B cell (primary cell): ENCODE measurements at regions of chr1 and their contacts with region 1.

Region 1: DNA sequence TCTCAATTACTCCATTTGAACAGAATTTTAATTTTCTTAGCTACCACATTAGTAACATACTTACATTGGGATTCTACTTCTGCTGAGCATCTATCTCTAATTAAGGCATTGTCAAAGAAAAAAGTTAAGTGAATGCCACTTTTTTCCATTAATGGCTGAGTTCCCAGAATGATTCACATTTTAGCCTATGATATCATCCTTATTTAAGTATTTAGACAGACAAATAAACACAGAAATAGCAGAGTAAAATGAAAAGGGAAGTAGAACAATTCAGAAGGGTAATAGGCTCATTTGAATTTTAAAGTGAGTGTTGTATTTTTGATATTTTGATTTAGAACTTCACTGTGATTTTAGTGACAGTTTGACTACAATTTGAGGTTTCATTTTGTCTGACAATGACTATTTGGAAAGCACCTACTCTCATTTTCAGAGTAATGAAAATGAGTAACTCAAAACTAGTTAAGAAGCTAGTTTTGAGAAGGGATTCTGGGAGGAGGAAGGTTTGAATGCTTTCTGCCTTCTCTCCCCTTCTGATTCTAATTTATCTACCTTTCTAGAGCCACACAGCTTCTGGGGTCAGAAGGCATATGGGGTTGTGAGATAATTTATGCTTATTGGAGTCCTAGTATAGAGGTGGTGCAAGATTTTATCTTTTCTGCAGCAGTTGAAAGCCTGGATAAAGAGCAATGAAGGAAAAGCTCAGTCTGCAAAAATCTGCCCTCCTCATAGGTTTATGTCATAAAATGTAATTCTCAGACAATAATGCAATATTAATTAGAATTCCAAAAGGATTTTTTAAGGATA is 15.5 kb downstream of the LYPLAL1 start:
- DNase-seq: peak; percentile 44
- ATAC-seq: peak; percentile 55
- H3K4me3 ChIP-seq: peak overlapping the region in 1 of 5 experiments; percentile 29
- H3K4me3 Mint-ChIP-seq: peak overlapping the region; percentile 71
- H3K27ac ChIP-seq: peak overlapping the region; percentile 52 to 85
- H3K27ac Mint-ChIP-seq: peak overlapping the region; percentile 80
- H3K4me1 ChIP-seq: peaks cover 15 to 28% of the 10 kb centered on the region in 2 donors
- H3K4me1 Mint-ChIP-seq: peaks cover 58% of the 10 kb centered on the region
- H3K27me3 ChIP-seq: no peaks in the 10 kb centered on the region
- H3K27me3 Mint-ChIP-seq: no peaks in the 10 kb centered on the region
- CTCF ChIP-seq: no peak

Region 2: GRCh38 chr1:219090607-219091006 is 98.6 kb before region 1 on chr1:
- CTCF ChIA-PET with region 1: no interaction called
- POLR2A ChIA-PET with region 1: no interaction called
- intact Hi-C with region 1: loop called (anchors 5 kb)
- DNase-seq: peak; percentile 65
- ATAC-seq: peak; percentile 78
- H3K4me3 ChIP-seq: peak overlapping the region in 1 of 5 experiments; percentile 26
- H3K4me3 Mint-ChIP-seq: peak overlapping the region; percentile 29
- H3K27ac ChIP-seq: peak overlapping the region; percentile 70 to 80
- H3K27ac Mint-ChIP-seq: peak overlapping the region; percentile 77
- H3K4me1 ChIP-seq: peaks cover 29 to 41% of the 10 kb centered on the region in 2 donors
- H3K4me1 Mint-ChIP-seq: peaks cover 53% of the 10 kb centered on the region
- H3K27me3 ChIP-seq: no peaks in the 10 kb centered on the region
- H3K27me3 Mint-ChIP-seq: no peaks in the 10 kb centered on the region
- CTCF ChIP-seq: no peak